Activated CD4-positive, alpha-beta memory T cell treated with anti-CD3 and anti-CD28 coated beads, Interleukin-2, amount 10 ng/mL, durations not matched to agents 7 days and 5 days (primary cell): ENCODE measurements at regions of chr15 and their contacts with region 1.

Region 1: GRCh38 chr15:41894791-41895463 is 1.1 kb upstream of the SPTBN5 start:
- DNase-seq: peak; percentile 92
- H3K4me3 Mint-ChIP-seq: peak overlapping the region; percentile 54
- H3K27ac Mint-ChIP-seq: peak overlapping the region; percentile 94
- H3K4me1 Mint-ChIP-seq: peaks cover 48% of the 10 kb centered on the region
- H3K27me3 Mint-ChIP-seq: no peaks in the 10 kb centered on the region

Region 2: GRCh38 chr15:41870689-41871081 is 24.2 kb before region 1 on chr15:
- CTCF ChIA-PET with region 1: interaction called, 5 read pairs
- POLR2A ChIA-PET with region 1: interaction called, 16 read pairs
- DNase-seq: peak; percentile 78
- H3K4me3 Mint-ChIP-seq: no peak overlapping the region
- H3K27ac Mint-ChIP-seq: peak overlapping the region; percentile 84
- H3K4me1 Mint-ChIP-seq: peaks cover 19% of the 10 kb centered on the region
- H3K27me3 Mint-ChIP-seq: no peaks in the 10 kb centered on the region